ENCODE measurements at regions of chr11 and their contacts with region 1.

Region 1: DNA sequence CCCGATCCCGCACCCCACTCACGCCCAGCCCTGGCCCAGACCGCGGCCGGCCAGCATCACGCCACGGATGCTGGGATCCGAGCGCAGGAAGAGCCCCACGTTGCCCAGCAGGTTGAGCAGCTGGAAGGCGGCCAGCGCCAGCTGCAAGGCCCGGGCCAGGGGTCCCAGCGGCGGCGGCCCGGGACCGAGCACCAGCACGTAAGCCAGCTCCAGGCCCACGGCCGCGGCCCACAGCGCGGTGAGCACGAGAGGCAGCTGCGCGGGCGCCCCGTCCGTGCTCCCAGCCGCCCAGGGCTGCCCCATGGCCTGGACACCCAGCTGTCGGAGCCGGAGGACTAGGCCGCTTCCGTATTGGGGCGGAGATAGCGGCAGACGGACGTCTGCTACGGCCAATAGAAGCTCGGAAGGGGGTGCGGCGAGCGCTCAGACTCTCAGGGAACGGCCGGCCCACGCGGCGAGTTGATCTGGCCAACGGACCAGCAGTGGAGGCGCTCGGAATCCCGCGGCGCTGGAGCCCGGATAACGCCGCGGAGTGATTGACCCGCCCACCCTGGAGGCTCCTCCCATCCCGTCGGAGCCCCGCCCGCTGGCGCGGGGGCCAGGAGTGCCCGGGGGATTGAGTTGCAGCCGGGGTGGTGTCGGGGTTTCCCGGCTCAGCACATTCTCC is at the start of gene ZDHHC24:
- DNase-seq: peak; percentile 86
- ATAC-seq: peak; percentile 85
- H3K4me3 Mint-ChIP-seq: peak within 1 kb of the TSS; percentile 77
- H3K27ac Mint-ChIP-seq: peak within 1 kb of the TSS; percentile 57
- H3K4me1 Mint-ChIP-seq: peaks cover 35% of the 10 kb centered on the region
- H3K27me3 Mint-ChIP-seq: no peaks in the 10 kb centered on the region
- CTCF ChIP-seq: no peak
- total RNA-seq, gene ZDHHC24: 14.6 and 19.0 TPM in 2 replicates

Region 2: DNA sequence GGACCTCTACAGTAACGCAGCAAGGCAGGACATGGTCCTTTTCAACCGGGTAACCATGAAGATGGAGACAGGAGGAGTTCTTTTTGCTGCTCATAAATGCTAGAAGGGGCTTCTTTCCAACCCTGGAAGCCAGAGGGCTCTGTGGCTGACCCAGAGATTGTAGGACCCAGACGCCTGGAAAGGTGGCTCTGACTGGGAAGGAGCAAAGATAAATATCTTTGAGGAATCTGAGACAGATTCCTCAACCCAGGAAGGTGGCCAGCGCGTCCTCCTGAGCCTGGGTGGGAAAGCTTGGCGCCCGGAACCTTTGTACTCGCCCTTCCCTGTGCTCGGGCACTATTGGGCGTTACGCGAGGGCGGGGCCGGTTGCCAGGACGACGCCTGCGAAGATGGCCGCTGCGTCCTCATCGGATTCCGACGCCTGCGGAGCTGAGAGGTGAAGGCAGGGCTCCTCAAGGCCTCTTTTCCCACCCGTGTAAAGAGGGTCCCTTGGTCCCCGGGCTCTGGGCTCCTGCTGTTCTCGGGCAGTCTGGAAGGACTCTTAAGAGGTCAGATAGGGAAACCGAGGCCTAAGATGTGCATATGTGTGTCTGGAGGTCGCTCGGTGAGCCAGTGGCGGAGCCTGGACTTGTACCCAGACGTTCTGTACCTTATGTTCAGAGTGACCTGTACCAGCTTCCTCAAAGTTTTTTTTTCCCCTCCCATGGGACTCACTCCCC is 35.4 kb before region 1 on chr11 and contains the start of gene BBS1:
- CTCF ChIA-PET with region 1: no interaction called
- POLR2A ChIA-PET with region 1: interaction called, 4 read pairs
- intact Hi-C with region 1: loop called (anchors 2 kb)
- DNase-seq: peak; percentile 82
- ATAC-seq: peak; percentile 98
- H3K4me3 Mint-ChIP-seq: peak within 1 kb of the TSS; percentile 91
- H3K27ac Mint-ChIP-seq: peak within 1 kb of the TSS; percentile 42
- H3K4me1 Mint-ChIP-seq: peaks cover 14% of the 10 kb centered on the region
- H3K27me3 Mint-ChIP-seq: no peaks in the 10 kb centered on the region
- CTCF ChIP-seq: no peak
- total RNA-seq, gene BBS1: 30.5 and 38.8 TPM in 2 replicates

Region 3: DNA sequence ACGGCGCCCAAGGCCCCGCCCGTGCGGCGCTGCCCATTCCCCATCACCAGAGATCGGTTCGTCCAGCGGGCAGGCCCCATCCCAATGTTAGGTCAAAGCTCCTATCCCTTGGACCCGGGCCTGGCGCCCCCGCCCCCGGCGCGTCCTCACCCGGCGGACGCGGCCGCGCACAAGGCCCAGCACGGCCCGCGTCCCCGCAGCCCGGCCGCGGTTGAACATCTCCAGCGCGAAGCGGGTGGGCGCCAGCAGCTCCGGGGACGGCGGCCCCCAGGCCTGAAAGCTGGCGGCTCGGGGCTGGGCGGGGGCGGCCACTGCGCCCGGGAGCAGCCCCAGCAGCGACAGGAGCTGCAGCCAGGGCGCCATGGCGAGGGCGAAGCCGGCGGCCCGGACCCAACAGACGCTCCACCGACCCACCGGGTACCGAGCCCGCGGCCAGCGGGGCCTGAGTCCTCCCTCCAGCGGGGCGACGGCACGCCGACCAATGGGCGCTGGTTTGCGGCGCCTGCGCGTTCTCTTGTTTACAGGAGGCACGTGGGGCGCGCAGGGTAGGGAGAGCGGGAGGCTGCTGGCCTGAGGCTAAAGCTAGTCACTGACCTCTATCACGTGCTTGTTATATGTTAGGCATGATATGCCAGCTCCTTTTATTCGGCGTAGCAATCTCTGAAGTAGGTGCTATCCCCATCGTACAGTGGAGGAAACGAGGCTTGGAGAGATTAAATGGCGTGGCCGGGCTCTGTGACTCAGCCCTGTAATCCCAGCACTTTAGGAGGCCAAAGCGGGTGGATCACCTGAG is 22.5 kb after region 1 on chr11 and contains the start of gene CTSF:
- CTCF ChIA-PET with region 1: no interaction called
- POLR2A ChIA-PET with region 1: interaction called, 6 read pairs
- intact Hi-C with region 1: loop called (anchors 1 kb)
- DNase-seq: peak; percentile 60
- ATAC-seq: peak; percentile 93
- H3K4me3 Mint-ChIP-seq: peak within 1 kb of the TSS; percentile 77
- H3K27ac Mint-ChIP-seq: no peak within 1 kb of the TSS
- H3K4me1 Mint-ChIP-seq: peaks cover 13% of the 10 kb centered on the region
- H3K27me3 Mint-ChIP-seq: peaks cover 15% of the 10 kb centered on the region
- CTCF ChIP-seq: no peak
- total RNA-seq, gene CTSF: 2.0 and 3.6 TPM in 2 replicates

Region 4: DNA sequence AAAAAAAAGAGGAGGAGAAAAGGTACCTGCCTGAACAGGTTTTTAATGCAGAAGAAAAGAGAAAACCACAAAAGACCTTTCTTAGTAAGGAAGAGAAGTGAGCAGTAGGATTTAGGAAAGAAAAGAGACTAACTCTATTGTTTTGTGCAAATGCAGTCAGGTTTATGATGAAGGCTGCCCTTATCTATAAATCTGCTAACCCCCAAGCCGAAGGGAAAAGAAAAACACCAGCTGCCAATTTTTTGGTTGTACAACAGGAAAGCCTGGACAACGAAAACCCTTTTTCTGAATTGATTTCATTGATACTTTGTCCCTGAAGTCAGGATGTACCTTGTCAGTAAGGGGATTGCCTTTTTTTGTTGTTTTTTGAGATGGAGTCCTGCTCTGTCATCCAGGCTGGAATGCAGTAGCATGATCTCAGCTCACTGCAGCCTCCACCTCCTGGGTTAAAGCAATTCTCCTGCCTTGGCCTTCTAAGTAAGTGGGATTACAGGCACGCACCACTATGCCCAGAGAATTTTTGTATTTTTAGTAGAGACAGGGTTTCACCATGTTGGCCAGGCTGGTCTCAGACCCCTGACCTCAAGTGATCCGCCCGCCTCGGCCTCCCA is 786.4 kb after region 1 on chr11:
- CTCF ChIA-PET with region 1: no interaction called
- POLR2A ChIA-PET with region 1: no interaction called
- intact Hi-C with region 1: no loop called
- DNase-seq: no peak
- ATAC-seq: no peak
- H3K4me3 Mint-ChIP-seq: no peak overlapping the region
- H3K27ac Mint-ChIP-seq: no peak overlapping the region
- H3K4me1 Mint-ChIP-seq: no peaks in the 10 kb centered on the region
- H3K27me3 Mint-ChIP-seq: no peaks in the 10 kb centered on the region
- CTCF ChIP-seq: no peak